K562 (cell line): ENCODE measurements at regions of chr1 and their contacts with region 1.

Region 1: GRCh38 chr1:10472220-10473144 is at the start of gene DFFA:
- DNase-seq: peak; percentile 91 to 99 (median 92)
- ATAC-seq: peak; percentile 84
- H3K4me3 ChIP-seq: peak within 1 kb of the TSS; percentile 59
- H3K27ac ChIP-seq: peak within 1 kb of the TSS; percentile 90
- H3K4me1 ChIP-seq: peaks cover 24 to 26% of the 10 kb centered on the region in 2 experiments; a peak in 4 of 5 replicates
- H3K27me3 ChIP-seq: no peaks in the 10 kb centered on the region
- CTCF ChIP-seq: peak in 1 of 3 experiments; percentile 26; a peak in 2 of 6 replicates
- EP300 ChIP-seq: peak; percentile 43; the same call in 1 of the 2 replicates
- POLR2A ChIP-seq: peak; percentile 82
- RAD21 ChIP-seq: no peak
- polyA plus RNA-seq, gene DFFA: 59.2 to 71.7 TPM

Region 2: DNA sequence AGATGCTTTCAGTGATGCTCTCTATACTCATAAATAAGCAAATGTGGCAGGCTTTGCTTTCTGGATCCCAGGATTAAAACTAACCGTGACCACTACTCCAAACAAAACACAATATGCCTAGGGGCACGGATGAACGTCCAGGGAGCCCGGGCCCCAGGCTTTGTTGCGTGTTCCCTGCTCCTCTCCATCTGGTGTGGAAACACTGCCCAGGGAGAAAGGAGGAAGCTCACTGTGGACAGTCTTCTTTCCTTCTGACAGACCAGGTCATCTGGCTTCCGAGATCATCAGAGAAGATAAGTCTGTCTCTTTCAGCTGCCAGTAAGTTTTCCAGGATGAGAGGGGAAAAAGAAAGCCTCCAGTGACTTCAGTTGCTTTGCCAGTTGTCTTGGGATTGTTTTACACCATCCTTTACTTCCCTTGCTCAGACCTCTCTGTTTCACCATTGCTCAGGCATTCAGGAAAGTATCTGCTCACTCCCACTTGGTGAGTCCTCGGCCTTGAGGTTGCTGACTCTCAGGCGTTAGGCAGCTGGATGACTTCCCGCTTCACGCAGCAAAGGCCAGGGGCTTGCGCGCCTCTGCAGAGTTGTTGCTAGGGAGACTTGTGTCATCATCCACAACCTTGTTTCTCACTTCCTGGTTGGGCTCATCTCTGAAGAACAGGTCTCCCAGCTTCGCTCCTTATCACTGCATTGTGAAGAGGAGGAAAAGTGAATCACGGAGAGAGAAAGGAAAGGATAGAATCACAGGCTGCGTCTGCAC is 94.2 kb before region 1 on chr1:
- CTCF ChIA-PET with region 1: no interaction called
- POLR2A ChIA-PET with region 1: no interaction called
- in situ Hi-C with region 1: no loop called
- intact Hi-C with region 1: loop called (anchors 5 kb)
- DNase-seq: peak; percentile 48 to 69 (median 56)
- ATAC-seq: peak; percentile 79
- H3K4me3 ChIP-seq: no peak overlapping the region
- H3K27ac ChIP-seq: peak overlapping the region; percentile 15; the same call in 1 of the 3 replicates
- H3K4me1 ChIP-seq: peaks cover 7 to 8% of the 10 kb centered on the region in 2 experiments; a peak in 4 of 5 replicates
- H3K27me3 ChIP-seq: no peaks in the 10 kb centered on the region
- CTCF ChIP-seq: no peak
- EP300 ChIP-seq: no peak
- POLR2A ChIP-seq: no peak
- RAD21 ChIP-seq: no peak

Region 3: DNA sequence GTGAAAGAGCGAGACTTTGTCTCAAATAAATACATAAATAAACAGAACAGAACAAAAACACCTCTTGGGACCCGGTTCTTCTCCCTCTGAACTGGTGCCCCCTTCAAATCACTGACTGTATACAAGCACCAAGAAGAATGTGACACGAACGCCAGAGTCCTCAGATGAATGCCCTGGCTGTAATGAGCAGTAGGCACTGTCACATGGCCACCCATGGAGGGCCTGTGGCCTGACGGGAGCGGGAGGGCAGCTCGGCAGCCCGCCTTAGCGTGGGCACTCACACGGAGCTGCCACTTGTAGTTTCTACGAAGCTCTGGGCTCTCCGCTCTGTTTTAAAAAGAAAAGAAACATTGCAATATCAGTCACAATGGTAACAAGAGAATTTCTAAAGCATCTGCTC is 148.3 kb after region 1 on chr1:
- CTCF ChIA-PET with region 1: no interaction called
- POLR2A ChIA-PET with region 1: no interaction called
- in situ Hi-C with region 1: no loop called
- intact Hi-C with region 1: no loop called
- DNase-seq: no peak
- ATAC-seq: no peak
- H3K4me3 ChIP-seq: no peak overlapping the region
- H3K27ac ChIP-seq: no peak overlapping the region
- H3K4me1 ChIP-seq: no peaks in the 10 kb centered on the region
- H3K27me3 ChIP-seq: no peaks in the 10 kb centered on the region
- CTCF ChIP-seq: no peak
- EP300 ChIP-seq: no peak
- POLR2A ChIP-seq: no peak
- RAD21 ChIP-seq: no peak